HEK293T (cell line): ENCODE measurements at regions of chr3 and their contacts with region 1.

Region 1: DNA sequence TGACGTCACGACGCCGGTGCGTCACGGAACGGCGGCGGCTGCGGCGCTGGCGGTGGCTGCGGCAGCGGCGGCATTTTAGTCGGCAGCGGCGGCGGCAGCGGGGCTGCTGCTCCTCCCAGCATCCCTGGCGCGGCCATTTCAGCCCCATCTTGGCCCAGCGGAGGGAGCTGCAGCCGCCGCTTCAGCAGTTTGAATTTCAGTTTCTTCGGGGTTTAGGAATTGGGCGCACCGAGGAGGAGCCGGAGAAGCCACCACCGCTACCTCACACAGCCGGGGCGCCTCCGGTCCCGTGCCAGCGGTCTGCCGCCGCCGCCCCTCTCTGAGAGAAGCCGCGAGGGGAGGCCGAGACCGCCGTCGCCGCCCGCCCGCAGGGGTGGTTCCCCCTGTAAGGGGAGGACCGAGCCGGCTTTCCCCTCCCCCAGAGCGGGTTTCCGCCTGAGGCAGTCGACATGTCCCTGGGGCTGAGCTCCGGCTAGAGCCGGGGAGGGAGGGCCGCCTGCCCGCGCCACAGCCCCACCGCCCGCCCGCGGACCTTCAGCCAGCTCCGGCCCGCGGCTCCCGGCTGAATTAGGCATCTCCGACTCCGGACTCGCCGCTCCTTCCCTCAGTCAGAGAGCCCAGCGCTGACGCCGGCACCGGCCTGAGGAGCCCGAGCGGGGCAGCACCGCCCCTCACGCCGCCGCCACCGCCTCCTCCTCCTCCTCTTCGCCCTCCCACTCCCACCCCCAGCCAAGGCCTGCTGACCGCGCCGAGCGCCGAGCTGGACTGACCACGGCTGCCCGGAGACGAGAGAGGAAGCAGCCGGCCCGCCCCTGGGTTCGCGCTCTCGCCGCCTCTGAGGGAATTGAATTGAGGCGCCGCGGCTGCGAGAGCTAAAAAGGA is at the start of gene TSC22D2:
- DNase-seq: peak; percentile 88

Region 2: DNA sequence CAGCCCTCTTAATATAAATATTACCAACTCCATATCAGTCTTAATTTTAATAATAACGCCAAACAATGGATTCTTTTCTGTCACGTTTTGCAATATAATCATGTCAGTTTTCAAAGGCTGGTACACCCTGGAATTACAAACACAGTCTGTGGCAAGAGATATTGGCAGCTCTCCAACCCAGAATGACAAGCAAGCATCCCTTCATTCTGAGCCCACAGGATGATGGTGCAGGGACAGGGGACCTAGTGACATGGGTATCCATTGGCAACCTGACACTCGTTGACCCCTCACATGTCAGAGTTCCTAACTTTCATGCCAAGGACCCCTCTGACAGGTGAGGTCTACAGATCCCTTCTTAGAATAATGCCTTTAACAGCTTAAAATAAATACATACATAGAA is 154.8 kb before region 1 on chr3:
- CTCF ChIA-PET with region 1: no interaction called
- POLR2A ChIA-PET with region 1: no interaction called
- DNase-seq: no peak

Region 3: DNA sequence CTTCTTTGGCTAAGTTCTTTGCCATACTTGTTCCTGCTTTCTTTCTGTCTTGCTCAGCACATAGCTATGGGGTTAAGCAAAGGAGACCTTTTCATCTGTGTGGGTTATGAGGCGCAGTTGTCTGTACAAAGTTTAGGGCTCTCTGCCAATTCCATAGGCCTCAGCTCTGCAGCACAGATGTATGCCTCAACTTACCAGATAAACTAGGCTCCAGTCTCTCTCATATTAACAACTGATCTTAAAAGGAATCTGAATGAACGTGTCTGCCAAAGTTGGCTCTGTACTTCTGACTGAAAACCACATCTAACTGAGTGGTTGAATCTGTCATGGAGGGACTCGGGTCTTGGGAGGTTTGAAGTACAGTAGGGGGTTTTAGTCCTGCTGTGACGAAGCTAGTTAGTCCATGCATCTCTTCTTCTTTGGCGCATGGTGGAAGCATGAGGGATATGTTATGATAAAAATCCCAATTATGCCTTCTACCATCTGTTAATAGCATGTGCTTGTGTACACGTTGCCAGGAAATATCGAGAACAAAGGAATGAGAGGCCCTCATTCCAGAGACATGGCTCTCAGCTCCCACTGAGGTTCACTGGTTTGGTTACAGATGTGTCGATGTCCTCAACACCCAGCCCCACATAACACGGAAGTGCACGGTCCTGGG is 114.9 kb before region 1 on chr3:
- CTCF ChIA-PET with region 1: no interaction called
- POLR2A ChIA-PET with region 1: no interaction called
- DNase-seq: no peak

Region 4: GRCh38 chr3:150371741-150372254 is 36.7 kb before region 1 on chr3:
- CTCF ChIA-PET with region 1: no interaction called
- POLR2A ChIA-PET with region 1: interaction called, 11 read pairs
- DNase-seq: peak; percentile 59

Region 5: GRCh38 chr3:150394606-150395005 is 13.9 kb before region 1 on chr3:
- CTCF ChIA-PET with region 1: interaction called, 3 read pairs
- POLR2A ChIA-PET with region 1: interaction called, 14 read pairs
- DNase-seq: no peak

Region 6: DNA sequence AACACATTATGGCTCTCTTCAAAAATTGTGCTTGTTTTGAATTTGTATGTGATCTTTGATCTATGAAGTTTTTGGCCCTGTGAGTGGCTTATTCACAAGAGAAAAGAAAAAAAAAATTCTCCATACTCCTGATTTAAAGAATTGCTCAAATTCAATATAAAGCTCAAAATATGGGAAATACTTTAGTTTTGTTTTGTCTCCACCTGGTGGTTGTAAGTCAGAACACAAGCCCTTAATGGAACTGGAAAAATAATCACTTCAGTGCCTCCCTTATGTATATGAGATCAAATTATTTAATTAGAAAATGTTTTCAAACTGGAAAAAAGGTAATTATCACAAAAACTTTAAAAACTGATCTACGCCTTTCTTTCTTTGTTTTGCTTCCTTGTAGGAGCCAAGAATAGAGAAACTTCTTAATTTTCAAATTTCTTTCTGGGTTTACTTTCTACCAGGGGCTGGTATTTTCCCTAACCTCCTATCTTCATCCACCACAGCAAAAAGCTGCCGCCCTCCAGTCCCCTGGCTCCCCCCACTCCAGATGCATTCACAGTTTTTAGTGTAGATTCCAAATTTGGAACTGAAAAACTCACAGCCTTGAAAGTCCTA is 87.2 kb after region 1 on chr3:
- CTCF ChIA-PET with region 1: interaction called, 6 read pairs
- POLR2A ChIA-PET with region 1: interaction called, 12 read pairs
- DNase-seq: peak; percentile 33